Activated naive CD4-positive, alpha-beta T cell treated with anti-CD3 and anti-CD28 coated beads, Interleukin-2, amount 10 ng/mL, durations not matched to agents 7 days and 5 days (primary cell): ENCODE measurements at regions of chr11 and their contacts with region 1.

Region 1: DNA sequence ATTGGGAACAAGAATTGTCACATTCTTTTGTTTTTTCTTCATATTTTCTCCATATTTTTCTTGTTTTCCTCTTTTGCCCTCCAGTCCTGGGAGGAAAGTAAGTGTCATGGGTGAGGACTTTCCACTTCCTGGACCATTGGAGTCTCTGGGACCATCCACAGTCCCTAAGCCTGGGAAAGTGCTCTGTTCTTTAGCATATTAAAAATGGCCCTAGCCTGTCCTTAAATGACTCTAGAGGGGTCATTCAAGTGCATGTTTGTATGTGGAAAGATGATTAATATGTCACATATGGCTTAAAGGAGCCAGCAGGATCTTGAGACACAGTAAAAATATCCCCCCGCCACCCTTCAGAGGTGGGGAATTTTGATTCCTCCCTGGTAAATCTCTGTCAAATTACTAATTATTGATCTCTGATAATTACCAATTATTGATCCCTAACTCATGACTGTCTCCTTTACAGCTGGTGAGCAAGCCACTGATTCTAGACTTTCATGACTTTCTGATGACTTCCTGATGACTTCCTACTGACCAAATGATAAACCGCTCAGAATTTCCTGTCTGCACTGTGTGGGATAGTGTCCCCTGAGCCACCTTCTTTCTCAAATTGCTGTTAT is 20.0 kb upstream of the SCGB1D1 start:
- DNase-seq: no peak
- H3K4me3 Mint-ChIP-seq: no peak overlapping the region
- H3K27ac Mint-ChIP-seq: no peak overlapping the region
- H3K4me1 Mint-ChIP-seq: peaks cover 4% of the 10 kb centered on the region
- H3K27me3 Mint-ChIP-seq: peaks cover 62% of the 10 kb centered on the region

Region 2: GRCh38 chr11:62054484-62055121 is 115.4 kb before region 1 on chr11:
- CTCF ChIA-PET with region 1: no interaction called
- DNase-seq: peak; percentile 50
- H3K4me3 Mint-ChIP-seq: no peak overlapping the region
- H3K27ac Mint-ChIP-seq: no peak overlapping the region
- H3K4me1 Mint-ChIP-seq: no peaks in the 10 kb centered on the region
- H3K27me3 Mint-ChIP-seq: peaks cover 13% of the 10 kb centered on the region

Region 3: GRCh38 chr11:62143727-62144126 is 26.3 kb before region 1 on chr11:
- CTCF ChIA-PET with region 1: no interaction called
- DNase-seq: no peak
- H3K4me3 Mint-ChIP-seq: no peak overlapping the region
- H3K27ac Mint-ChIP-seq: no peak overlapping the region
- H3K4me1 Mint-ChIP-seq: no peaks in the 10 kb centered on the region
- H3K27me3 Mint-ChIP-seq: no peaks in the 10 kb centered on the region

Region 4: DNA sequence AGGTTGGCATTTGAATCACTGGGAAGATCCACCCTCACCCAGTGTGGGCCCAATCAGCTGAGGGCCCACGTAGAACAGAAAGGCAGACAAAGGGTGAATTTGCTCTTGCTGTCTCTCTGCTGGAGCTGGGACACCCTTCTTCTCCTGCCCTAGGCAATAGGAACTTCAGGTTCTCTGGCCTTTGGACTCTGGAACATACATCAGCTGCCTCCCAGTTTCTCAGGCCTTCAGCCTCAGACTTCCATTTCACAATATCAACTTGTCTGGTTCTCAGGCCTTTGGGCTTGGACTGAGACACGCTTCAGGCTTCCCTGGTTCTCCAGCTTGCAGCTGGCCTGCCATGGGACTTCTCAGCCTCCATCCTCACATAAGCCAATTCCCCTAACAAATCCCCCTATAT is 152.5 kb after region 1 on chr11:
- CTCF ChIA-PET with region 1: interaction called, 12 read pairs
- DNase-seq: no peak
- H3K4me3 Mint-ChIP-seq: no peak overlapping the region
- H3K27ac Mint-ChIP-seq: no peak overlapping the region
- H3K4me1 Mint-ChIP-seq: no peaks in the 10 kb centered on the region
- H3K27me3 Mint-ChIP-seq: peaks cover 17% of the 10 kb centered on the region